Activated naive CD4-positive, alpha-beta T cell treated with anti-CD3 and anti-CD28 coated beads for 36 hours (primary cell): ENCODE measurements at regions of chr2 and their contacts with region 1.

Region 1: GRCh38 chr2:224650815-224651439 is 65.2 kb downstream of the CCDC195 start:
- DNase-seq: no peak
- H3K4me3 Mint-ChIP-seq: no peak overlapping the region
- H3K27ac Mint-ChIP-seq: no peak overlapping the region
- H3K4me1 Mint-ChIP-seq: peaks cover 2% of the 10 kb centered on the region
- H3K27me3 Mint-ChIP-seq: no peaks in the 10 kb centered on the region

Region 2: GRCh38 chr2:224293976-224294375 is 357.0 kb before region 1 on chr2:
- CTCF ChIA-PET with region 1: no interaction called
- intact Hi-C with region 1: loop called (anchors 5 kb)
- DNase-seq: no peak
- H3K4me3 Mint-ChIP-seq: no peak overlapping the region
- H3K27ac Mint-ChIP-seq: no peak overlapping the region
- H3K4me1 Mint-ChIP-seq: no peaks in the 10 kb centered on the region
- H3K27me3 Mint-ChIP-seq: peaks cover 21% of the 10 kb centered on the region

Region 3: GRCh38 chr2:224369028-224369632 is 281.8 kb before region 1 on chr2:
- CTCF ChIA-PET with region 1: interaction called, 16 read pairs
- intact Hi-C with region 1: loop called (anchors 1 kb)
- DNase-seq: peak; percentile 14
- H3K4me3 Mint-ChIP-seq: no peak overlapping the region
- H3K27ac Mint-ChIP-seq: no peak overlapping the region
- H3K4me1 Mint-ChIP-seq: no peaks in the 10 kb centered on the region
- H3K27me3 Mint-ChIP-seq: no peaks in the 10 kb centered on the region

Region 4: GRCh38 chr2:224449212-224450147 is 201.4 kb before region 1 on chr2:
- CTCF ChIA-PET with region 1: interaction called, 3 read pairs
- intact Hi-C with region 1: loop called (anchors 5 kb)
- DNase-seq: peak; percentile 41
- H3K4me3 Mint-ChIP-seq: no peak overlapping the region
- H3K27ac Mint-ChIP-seq: no peak overlapping the region
- H3K4me1 Mint-ChIP-seq: no peaks in the 10 kb centered on the region
- H3K27me3 Mint-ChIP-seq: peaks cover 3% of the 10 kb centered on the region

Region 5: GRCh38 chr2:224498991-224499390 is 151.9 kb before region 1 on chr2:
- CTCF ChIA-PET with region 1: no interaction called
- intact Hi-C with region 1: no loop called
- DNase-seq: no peak
- H3K4me3 Mint-ChIP-seq: no peak overlapping the region
- H3K27ac Mint-ChIP-seq: no peak overlapping the region
- H3K4me1 Mint-ChIP-seq: no peaks in the 10 kb centered on the region
- H3K27me3 Mint-ChIP-seq: no peaks in the 10 kb centered on the region

Region 6: DNA sequence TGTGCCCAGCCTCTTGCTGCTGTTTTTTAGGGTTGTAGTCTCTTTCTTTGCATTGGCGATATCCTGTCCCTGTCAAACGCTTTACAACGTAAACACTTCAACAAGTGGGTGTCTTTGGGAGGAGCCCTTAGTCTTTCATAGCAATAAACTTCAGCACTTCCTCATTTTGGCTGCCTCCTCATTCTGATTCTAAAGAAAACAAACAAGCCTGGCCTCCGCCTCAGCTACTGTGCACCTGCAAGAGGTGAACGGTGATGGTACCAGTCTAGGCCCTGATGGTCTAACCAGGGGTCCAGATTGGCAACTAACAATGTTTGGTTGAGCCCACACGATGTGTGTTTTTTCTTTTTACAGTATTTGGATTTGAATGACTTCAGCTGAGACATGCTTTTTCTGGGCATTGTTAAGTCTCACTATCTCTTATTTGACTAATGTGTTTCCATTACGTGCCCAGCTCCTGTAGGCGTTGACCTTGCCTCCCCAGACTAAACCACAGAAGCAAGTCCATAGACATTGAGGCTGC is 12.6 kb before region 1 on chr2:
- CTCF ChIA-PET with region 1: interaction called, 10 read pairs
- intact Hi-C with region 1: no loop called
- DNase-seq: peak; percentile 58
- H3K4me3 Mint-ChIP-seq: peak overlapping the region; percentile 26
- H3K27ac Mint-ChIP-seq: peak overlapping the region; percentile 89
- H3K4me1 Mint-ChIP-seq: peaks cover 12% of the 10 kb centered on the region
- H3K27me3 Mint-ChIP-seq: no peaks in the 10 kb centered on the region

Region 7: DNA sequence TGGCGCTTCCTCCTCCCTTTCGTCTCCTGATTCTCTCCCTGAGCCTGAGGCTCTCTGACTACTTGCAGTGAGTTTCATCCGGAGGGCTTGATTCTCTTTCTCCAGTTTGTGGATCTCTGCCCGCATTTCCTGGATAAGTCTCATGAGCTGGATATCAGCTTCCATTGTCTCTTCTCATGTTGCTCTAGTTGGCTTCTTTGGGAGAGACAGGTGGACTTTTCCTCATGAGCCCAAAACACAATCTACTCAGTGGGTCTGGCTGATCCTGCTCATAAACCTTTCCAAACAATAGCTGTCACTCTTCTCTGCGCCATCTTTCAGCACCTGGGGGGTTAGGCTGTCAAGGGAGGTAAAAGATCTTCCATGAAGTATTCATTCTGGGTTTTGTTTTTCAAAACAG is 65.3 kb after region 1 on chr2 and contains the start of gene CCDC195:
- CTCF ChIA-PET with region 1: no interaction called
- intact Hi-C with region 1: no loop called
- DNase-seq: no peak
- H3K4me3 Mint-ChIP-seq: no peak within 1 kb of the TSS
- H3K27ac Mint-ChIP-seq: no peak within 1 kb of the TSS
- H3K4me1 Mint-ChIP-seq: no peaks in the 10 kb centered on the region
- H3K27me3 Mint-ChIP-seq: no peaks in the 10 kb centered on the region
- total RNA-seq, gene CCDC195: not detected

Region 8: GRCh38 chr2:224778474-224778877 is 127.5 kb after region 1 on chr2:
- CTCF ChIA-PET with region 1: interaction called, 9 read pairs
- intact Hi-C with region 1: loop called (anchors 1 kb)
- DNase-seq: peak; percentile 86
- H3K4me3 Mint-ChIP-seq: no peak overlapping the region
- H3K27ac Mint-ChIP-seq: peak overlapping the region; percentile 22
- H3K4me1 Mint-ChIP-seq: peaks cover 5% of the 10 kb centered on the region
- H3K27me3 Mint-ChIP-seq: no peaks in the 10 kb centered on the region

Region 9: DNA sequence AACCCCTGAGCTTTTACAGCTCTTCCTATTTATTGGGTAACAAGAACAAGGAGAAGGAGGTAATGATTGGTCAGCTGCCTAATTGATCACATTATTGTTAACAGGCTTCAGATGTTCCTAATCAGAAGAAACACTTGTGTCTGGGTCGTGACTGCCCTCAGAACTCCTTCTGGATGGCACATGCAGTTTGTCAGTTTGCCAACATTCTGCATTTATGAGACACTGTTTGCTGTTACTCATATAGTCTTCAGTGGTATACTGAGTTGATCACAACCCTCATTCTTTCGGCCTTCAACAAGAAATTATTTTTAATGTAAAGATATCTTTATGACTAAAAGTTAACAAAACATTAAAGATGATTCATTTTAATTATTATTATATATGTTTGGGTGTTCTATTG is 487.0 kb after region 1 on chr2:
- CTCF ChIA-PET with region 1: no interaction called
- intact Hi-C with region 1: no loop called
- DNase-seq: no peak
- H3K4me3 Mint-ChIP-seq: no peak overlapping the region
- H3K27ac Mint-ChIP-seq: no peak overlapping the region
- H3K4me1 Mint-ChIP-seq: no peaks in the 10 kb centered on the region
- H3K27me3 Mint-ChIP-seq: no peaks in the 10 kb centered on the region